Activated CD4-positive, alpha-beta T cell treated with anti-CD3 and anti-CD28 coated beads for 36 hours (primary cell): ENCODE measurements at regions of chr13 and their contacts with region 1.

Region 1: DNA sequence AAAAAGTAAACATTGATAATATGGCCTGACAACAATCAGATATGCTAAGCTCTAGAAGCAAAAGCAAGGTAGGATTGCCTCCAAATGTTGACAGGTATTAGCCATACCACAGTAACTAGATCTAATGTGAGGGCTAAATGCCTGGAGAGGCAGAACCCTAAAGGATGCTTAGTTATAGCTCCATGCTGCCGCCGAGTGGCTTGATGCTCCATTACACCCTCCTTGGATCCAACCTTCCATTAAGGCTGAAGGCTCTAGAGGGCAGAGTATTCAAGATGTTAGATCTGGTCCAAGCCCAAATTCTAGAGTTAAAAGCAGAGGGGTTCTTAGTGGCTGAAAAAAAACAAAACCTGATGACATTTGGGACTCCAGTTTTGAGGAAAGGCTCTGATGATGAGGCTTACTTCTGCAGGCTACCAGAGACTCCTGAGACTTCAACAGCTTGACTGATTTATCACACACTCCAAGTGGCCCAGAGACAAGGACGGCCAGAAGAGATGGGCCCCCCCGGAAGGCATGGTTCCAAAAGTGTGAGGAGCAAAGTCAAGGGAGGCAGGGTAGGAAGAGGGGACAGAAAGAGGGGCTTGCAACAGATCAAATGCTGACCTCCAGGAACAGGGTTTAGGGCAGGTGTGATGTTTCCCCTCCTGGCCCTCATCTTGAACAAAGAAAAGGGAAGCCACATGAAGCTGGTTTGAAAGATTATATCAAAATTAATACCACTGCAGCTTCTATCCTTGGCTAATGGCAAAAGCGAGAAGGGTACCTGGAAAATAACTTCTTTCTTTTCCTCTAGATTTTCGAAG is 21.9 kb upstream of the CPB2 start:
- DNase-seq: peak; percentile 86
- ATAC-seq: peak; percentile 86
- H3K4me3 Mint-ChIP-seq: no peak overlapping the region
- H3K27ac Mint-ChIP-seq: peak overlapping the region; percentile 76
- H3K4me1 Mint-ChIP-seq: peaks cover 39% of the 10 kb centered on the region
- H3K27me3 Mint-ChIP-seq: no peaks in the 10 kb centered on the region

Region 2: DNA sequence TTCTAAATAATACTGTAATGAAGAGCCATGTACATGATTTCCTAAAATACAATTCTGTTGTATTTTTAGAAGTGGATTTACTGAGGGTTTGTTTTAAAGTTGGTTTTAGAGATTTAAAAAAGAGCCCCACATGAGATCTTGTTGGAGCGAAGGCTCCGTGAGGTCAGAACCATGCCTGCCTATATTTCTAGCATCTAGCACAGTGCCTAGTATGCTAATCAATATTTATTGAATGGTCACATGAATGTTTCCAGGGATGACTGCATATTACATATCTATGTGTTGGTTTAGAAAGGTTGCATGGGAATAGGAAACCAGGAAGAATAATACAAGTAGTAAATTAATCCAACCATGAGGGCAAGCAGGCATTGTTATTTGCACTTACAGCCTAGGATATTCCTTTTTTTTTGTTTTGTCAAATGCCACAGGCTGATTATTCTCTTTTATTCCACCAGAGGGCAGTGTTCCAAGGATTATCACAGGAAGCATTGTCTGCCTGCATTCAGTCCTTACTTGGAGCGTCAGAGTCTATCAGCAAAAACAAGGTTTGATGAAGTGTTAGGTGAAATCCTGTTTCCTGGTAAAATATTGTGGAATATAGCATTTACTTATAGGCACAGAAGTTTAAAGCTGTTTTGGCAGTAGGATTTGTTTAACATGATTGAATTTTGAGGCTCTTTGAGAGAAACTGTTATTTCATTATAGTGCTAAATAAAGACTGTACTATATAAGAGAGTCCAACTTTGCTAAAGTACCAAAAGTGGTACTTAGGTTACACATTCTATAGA is 615.3 kb before region 1 on chr13:
- CTCF ChIA-PET with region 1: no interaction called
- POLR2A ChIA-PET with region 1: no interaction called
- intact Hi-C with region 1: loop called in 1 of 2 experiments (anchors 2 kb)
- DNase-seq: peak; percentile 25
- ATAC-seq: peak; percentile 89
- H3K4me3 Mint-ChIP-seq: no peak overlapping the region
- H3K27ac Mint-ChIP-seq: peak overlapping the region; percentile 66
- H3K4me1 Mint-ChIP-seq: peaks cover 14% of the 10 kb centered on the region
- H3K27me3 Mint-ChIP-seq: no peaks in the 10 kb centered on the region

Region 3: DNA sequence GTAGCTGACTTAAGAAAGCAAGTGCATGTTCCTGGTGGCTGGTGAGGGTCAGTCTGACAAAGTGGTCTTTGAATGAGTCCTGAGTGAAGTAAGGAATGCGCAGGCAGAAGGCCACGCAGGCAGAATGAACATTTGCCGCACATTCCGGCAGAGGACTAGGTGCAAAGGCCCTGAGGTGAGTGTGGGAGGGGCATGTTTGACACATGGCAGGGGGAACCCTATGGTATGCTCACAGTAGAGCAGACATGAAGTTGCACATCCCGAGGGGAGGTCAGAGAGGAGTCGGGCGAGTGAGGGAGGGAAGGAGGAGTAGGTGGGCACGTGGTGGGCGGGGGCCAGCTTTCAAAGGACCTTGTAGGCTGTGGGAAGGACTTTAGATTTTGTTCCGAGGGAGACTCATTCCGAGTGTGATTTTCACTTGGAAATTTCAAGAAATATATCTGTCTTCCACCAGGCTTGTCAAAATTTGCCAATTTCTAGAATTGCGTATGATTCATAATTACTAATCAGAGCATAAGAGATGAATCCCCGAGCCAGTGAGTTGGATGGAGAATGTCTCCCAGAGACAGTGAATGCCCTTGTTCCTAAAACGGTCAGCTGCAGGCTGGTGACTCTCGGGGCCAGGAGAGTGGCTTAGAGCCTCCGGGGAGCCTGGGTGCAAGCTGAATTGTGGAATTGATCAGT is 551.5 kb before region 1 on chr13:
- CTCF ChIA-PET with region 1: no interaction called
- POLR2A ChIA-PET with region 1: no interaction called
- intact Hi-C with region 1: no loop called
- DNase-seq: no peak
- ATAC-seq: no peak
- H3K4me3 Mint-ChIP-seq: no peak overlapping the region
- H3K27ac Mint-ChIP-seq: no peak overlapping the region
- H3K4me1 Mint-ChIP-seq: no peaks in the 10 kb centered on the region
- H3K27me3 Mint-ChIP-seq: peaks cover 8% of the 10 kb centered on the region

Region 4: DNA sequence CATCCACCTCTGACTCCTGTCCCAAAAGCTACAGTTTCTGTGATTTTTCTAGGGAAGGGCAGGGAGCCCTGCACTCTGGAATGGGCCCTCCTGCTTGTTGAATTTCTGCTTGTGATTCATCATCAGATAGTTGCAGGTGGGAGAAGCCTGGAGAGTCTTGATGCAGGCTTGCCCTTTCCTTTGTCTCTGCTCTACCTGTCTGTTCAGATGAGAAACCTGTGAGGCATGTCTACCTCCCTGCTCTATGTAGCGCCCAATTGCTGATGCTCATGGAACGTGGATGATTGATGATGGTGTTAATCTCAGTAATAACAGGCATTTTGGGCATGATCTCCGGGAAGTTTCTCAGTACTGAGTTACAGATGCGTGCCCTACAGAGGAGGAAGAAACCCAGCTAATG is 435.5 kb before region 1 on chr13:
- CTCF ChIA-PET with region 1: no interaction called
- POLR2A ChIA-PET with region 1: no interaction called
- intact Hi-C with region 1: no loop called
- DNase-seq: no peak
- ATAC-seq: no peak
- H3K4me3 Mint-ChIP-seq: no peak overlapping the region
- H3K27ac Mint-ChIP-seq: no peak overlapping the region
- H3K4me1 Mint-ChIP-seq: peaks cover 16% of the 10 kb centered on the region
- H3K27me3 Mint-ChIP-seq: peaks cover 2% of the 10 kb centered on the region

Region 5: GRCh38 chr13:45807520-45808099 is 319.1 kb before region 1 on chr13:
- CTCF ChIA-PET with region 1: no interaction called
- POLR2A ChIA-PET with region 1: no interaction called
- intact Hi-C with region 1: loop called in 1 of 2 experiments (anchors 5 kb)
- DNase-seq: peak; percentile 43
- ATAC-seq: no peak
- H3K4me3 Mint-ChIP-seq: no peak overlapping the region
- H3K27ac Mint-ChIP-seq: no peak overlapping the region
- H3K4me1 Mint-ChIP-seq: peaks cover 4% of the 10 kb centered on the region
- H3K27me3 Mint-ChIP-seq: no peaks in the 10 kb centered on the region

Region 6: DNA sequence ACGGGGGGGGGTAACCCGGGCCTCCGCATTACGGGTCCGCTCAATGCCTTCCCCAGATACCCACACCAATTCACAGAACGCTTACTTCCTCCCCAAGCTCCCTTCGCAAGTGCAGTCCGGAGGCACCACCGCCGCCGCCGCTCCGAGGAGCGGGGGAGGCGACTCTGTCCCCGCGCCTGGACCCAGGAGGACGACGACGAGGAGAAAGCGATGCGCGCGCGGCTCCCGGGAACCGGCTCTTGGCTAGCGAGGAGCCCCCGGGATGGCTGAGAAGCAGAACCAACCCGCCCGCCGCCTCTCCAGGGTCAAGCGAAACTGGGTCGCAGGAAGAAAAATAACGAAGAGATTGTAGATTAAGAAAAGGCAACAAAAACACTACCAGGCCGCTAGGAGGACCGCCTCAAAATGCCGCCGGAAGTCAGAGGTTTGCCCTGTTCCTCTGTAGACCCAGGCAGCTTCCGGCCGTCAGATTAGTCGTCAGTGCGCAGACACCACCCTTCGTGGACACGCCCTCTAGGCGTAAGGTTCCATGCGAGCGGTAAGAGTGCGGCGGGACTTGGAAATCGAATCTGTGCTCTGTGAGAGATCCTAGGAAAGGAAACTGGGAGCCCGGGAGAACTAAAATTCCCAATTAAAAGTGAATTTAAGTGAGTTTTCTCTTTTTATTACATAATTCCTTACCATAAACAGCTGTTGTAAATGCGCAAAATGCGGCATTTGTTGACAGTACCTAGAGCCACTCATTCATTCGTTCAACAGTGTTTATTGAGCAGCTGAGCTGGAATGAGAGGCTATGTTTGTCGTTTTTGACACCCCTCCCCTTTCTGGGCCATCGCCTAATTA is 74.2 kb before region 1 on chr13 and contains the start of gene ZC3H13:
- CTCF ChIA-PET with region 1: interaction called, 6 read pairs
- POLR2A ChIA-PET with region 1: interaction called, 3 read pairs
- intact Hi-C with region 1: loop called (anchors 2 kb)
- DNase-seq: peak; percentile 96
- ATAC-seq: peak; percentile 99
- H3K4me3 Mint-ChIP-seq: peak within 1 kb of the TSS; percentile 83
- H3K27ac Mint-ChIP-seq: peak within 1 kb of the TSS; percentile 94
- H3K4me1 Mint-ChIP-seq: peaks cover 34% of the 10 kb centered on the region
- H3K27me3 Mint-ChIP-seq: peaks cover 2% of the 10 kb centered on the region
- total RNA-seq, gene ZC3H13: 38.5 to 52.8 TPM

Region 7: DNA sequence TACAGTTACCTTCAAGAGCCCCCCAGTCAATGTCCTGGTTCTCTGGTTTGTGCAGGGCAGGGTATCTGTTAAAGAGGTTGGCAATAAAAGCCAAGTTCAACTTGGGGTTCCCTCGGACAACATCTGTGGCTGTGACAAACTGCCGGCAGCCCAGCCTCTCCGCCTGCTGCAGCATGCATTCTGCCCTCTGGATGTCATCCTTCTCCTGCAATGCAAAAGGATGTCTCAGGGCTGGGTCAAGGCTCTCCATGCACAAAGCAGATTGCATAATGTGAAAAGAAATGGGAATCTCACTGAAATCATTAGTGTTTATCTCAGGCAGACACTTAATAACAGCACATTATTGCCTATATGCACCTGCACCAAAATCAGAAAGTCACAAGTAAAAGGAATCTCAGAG is 20.1 kb after region 1 on chr13:
- CTCF ChIA-PET with region 1: interaction called, 52 read pairs
- POLR2A ChIA-PET with region 1: interaction called, 3 read pairs
- intact Hi-C with region 1: no loop called
- DNase-seq: no peak
- ATAC-seq: no peak
- H3K4me3 Mint-ChIP-seq: no peak overlapping the region
- H3K27ac Mint-ChIP-seq: peak overlapping the region; percentile 63
- H3K4me1 Mint-ChIP-seq: peaks cover 36% of the 10 kb centered on the region
- H3K27me3 Mint-ChIP-seq: no peaks in the 10 kb centered on the region

Region 8: GRCh38 chr13:46743191-46743590 is 616.4 kb after region 1 on chr13:
- CTCF ChIA-PET with region 1: no interaction called
- POLR2A ChIA-PET with region 1: no interaction called
- intact Hi-C with region 1: no loop called
- DNase-seq: no peak
- ATAC-seq: no peak
- H3K4me3 Mint-ChIP-seq: no peak overlapping the region
- H3K27ac Mint-ChIP-seq: no peak overlapping the region
- H3K4me1 Mint-ChIP-seq: no peaks in the 10 kb centered on the region
- H3K27me3 Mint-ChIP-seq: no peaks in the 10 kb centered on the region